Naive thymus-derived CD4-positive, alpha-beta T cell (primary cell): ENCODE measurements at regions of chr6 and their contacts with region 1.

Region 1: DNA sequence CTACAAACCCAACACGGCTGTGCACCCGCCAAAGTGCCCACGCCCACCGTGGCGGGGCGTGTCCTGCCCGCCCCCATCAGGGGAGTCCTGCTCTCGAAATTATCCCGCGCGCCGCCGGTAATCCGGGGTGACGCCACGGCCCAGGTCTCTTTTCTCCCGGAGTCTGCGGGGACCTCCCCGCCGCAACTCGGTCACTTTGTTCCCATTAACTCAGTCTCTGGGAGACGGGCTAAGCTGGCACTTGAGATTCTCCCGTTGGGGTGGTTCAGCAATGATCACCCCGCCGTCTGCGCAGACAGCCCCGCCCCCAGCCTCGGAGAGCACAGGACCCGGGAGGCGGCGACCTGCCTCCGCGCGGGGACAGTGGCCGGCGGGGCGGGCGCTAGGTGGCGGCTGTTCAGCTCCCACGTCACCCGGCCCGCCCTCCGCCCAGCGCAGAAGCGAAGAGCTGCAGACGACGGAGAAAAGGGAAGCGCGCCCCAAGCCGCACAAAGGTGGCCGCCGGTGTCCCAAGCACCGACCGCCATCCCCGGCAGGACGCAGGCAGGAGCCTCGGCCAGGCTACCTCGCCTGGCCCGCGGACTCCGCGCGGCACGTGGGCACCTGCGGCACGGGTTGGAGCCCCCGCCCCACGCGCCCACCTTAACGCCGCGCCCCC is 31.5 kb downstream of the SF3B5 start:
- DNase-seq: peak; percentile 84 to 91 (median 88)
- ATAC-seq: peak; percentile 96
- H3K4me3 ChIP-seq: peak overlapping the region; percentile 56
- H3K4me3 Mint-ChIP-seq: peak overlapping the region; percentile 87 to 94 (median 91)
- H3K27ac ChIP-seq: peak overlapping the region; percentile 85
- H3K27ac Mint-ChIP-seq: peak overlapping the region; percentile 83 to 97 (median 88)
- H3K4me1 ChIP-seq: peaks cover 0 to 12% of the 10 kb centered on the region in 2 donors
- H3K4me1 Mint-ChIP-seq: peaks cover 17 to 44% (median 29%) of the 10 kb centered on the region in 7 donors
- H3K27me3 ChIP-seq: no peaks in the 10 kb centered on the region
- H3K27me3 Mint-ChIP-seq: peaks cover 0 to 2% (median 0%) of the 10 kb centered on the region in 5 donors

Region 2: GRCh38 chr6:143450453-143451371 is 613.2 kb before region 1 on chr6 and contains the starts of genes ADAT2 and PEX3:
- CTCF ChIA-PET with region 1: no interaction called
- POLR2A ChIA-PET with region 1: no interaction called
- intact Hi-C with region 1: loop called (anchors 1 to 2 kb)
- DNase-seq: peak; percentile 87 to 95 (median 94)
- ATAC-seq: peak; percentile 98
- H3K4me3 ChIP-seq: peak within 1 kb of the TSS; percentile 89
- H3K4me3 Mint-ChIP-seq: peak within 1 kb of the TSS; percentile 84 to 100 (median 99)
- H3K27ac ChIP-seq: peak within 1 kb of the TSS; percentile 80
- H3K27ac Mint-ChIP-seq: peak within 1 kb of the TSS; percentile 93 to 99 (median 96)
- H3K4me1 ChIP-seq: peaks cover 14 to 18% of the 10 kb centered on the region in 2 donors
- H3K4me1 Mint-ChIP-seq: peaks cover 20 to 61% (median 49%) of the 10 kb centered on the region in 7 donors
- H3K27me3 ChIP-seq: no peaks in the 10 kb centered on the region
- H3K27me3 Mint-ChIP-seq: no peaks in the 10 kb centered on the region
- total RNA-seq, gene ADAT2: 18.4 to 25.8 (median 20.8) TPM
- total RNA-seq, gene PEX3: 10.9 to 28.8 (median 19.1) TPM

Region 3: GRCh38 chr6:144013486-144013909 is 50.4 kb before region 1 on chr6:
- CTCF ChIA-PET with region 1: no interaction called
- POLR2A ChIA-PET with region 1: no interaction called
- intact Hi-C with region 1: loop called (anchors 1 to 2 kb)
- DNase-seq: peak; percentile 18 to 58 (median 45)
- ATAC-seq: peak; percentile 54
- H3K4me3 ChIP-seq: no peak overlapping the region
- H3K4me3 Mint-ChIP-seq: no peak overlapping the region
- H3K27ac ChIP-seq: no peak overlapping the region
- H3K27ac Mint-ChIP-seq: peak overlapping the region in 1 of 9 donors; percentile 9
- H3K4me1 ChIP-seq: no peaks in the 10 kb centered on the region
- H3K4me1 Mint-ChIP-seq: peaks cover 0 to 4% (median 0%) of the 10 kb centered on the region in 7 donors
- H3K27me3 ChIP-seq: peaks cover 0 to 6% of the 10 kb centered on the region in 2 donors
- H3K27me3 Mint-ChIP-seq: peaks cover 11 to 45% (median 28%) of the 10 kb centered on the region in 5 donors

Region 4: GRCh38 chr6:144793744-144794143 is 729.9 kb after region 1 on chr6:
- CTCF ChIA-PET with region 1: no interaction called
- POLR2A ChIA-PET with region 1: no interaction called
- intact Hi-C with region 1: no loop called
- DNase-seq: no peak
- ATAC-seq: no peak
- H3K4me3 ChIP-seq: no peak overlapping the region
- H3K4me3 Mint-ChIP-seq: no peak overlapping the region
- H3K27ac ChIP-seq: no peak overlapping the region
- H3K27ac Mint-ChIP-seq: no peak overlapping the region
- H3K4me1 ChIP-seq: no peaks in the 10 kb centered on the region
- H3K4me1 Mint-ChIP-seq: no peaks in the 10 kb centered on the region
- H3K27me3 ChIP-seq: no peaks in the 10 kb centered on the region
- H3K27me3 Mint-ChIP-seq: no peaks in the 10 kb centered on the region

Region 5: DNA sequence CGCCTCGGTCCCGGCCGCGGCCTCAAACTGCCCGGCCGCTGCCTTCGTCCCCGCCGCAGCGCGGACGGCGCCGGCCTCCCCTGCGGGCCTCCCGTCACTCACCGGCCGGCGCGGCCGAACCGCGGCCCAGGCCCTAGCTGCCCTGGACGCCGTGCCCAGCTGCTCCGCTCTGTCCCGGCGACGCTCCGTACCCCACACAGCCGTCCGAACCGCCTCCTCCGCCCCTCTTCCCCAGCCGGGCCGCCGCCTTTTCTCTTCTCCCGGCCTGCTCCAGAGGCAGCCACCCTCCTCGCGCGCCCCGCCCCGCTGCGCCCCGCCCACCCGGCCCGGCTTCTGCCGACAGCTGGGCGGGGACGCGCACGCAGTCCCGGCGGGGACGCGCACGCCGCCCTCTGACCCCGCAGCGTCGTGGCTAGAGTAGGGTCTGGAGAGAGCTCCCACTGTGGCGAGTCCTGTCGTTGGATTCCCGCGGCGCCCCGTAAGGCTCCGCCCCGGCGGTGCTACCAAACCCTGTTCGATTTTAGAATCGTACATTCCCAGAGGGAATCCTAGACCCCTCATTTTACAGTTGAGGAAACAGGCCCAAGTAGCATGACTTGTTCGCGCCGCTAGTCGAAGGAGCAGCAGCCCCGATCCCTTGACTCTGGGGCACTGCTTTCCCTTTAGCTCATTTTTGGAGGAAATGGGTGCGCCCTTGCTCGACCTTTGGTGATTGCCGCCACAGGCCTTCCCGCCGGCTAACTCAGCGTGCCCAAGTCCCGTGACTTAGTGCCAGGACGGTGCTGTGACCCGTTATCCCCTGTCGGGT is 1750.8 kb after region 1 on chr6 and contains the start of gene FBXO30:
- CTCF ChIA-PET with region 1: no interaction called
- POLR2A ChIA-PET with region 1: no interaction called
- intact Hi-C with region 1: loop called in 1 of 2 experiments (anchors 2 kb)
- DNase-seq: peak; percentile 81 to 94 (median 88)
- ATAC-seq: peak; percentile 98
- H3K4me3 ChIP-seq: peak within 1 kb of the TSS; percentile 92
- H3K4me3 Mint-ChIP-seq: peak within 1 kb of the TSS; percentile 91 to 96 (median 94)
- H3K27ac ChIP-seq: peak within 1 kb of the TSS; percentile 80
- H3K27ac Mint-ChIP-seq: peak within 1 kb of the TSS; percentile 83 to 96 (median 95)
- H3K4me1 ChIP-seq: peaks cover 0 to 18% of the 10 kb centered on the region in 2 donors
- H3K4me1 Mint-ChIP-seq: peaks cover 25 to 50% (median 41%) of the 10 kb centered on the region in 7 donors
- H3K27me3 ChIP-seq: no peaks in the 10 kb centered on the region
- H3K27me3 Mint-ChIP-seq: peaks cover 0 to 3% (median 0%) of the 10 kb centered on the region in 5 donors
- total RNA-seq, gene FBXO30: 1.6 to 5.1 (median 4.8) TPM